Mammary epithelial cell (primary cell): ENCODE measurements at regions of chr20 and their contacts with region 1.

Region 1: DNA sequence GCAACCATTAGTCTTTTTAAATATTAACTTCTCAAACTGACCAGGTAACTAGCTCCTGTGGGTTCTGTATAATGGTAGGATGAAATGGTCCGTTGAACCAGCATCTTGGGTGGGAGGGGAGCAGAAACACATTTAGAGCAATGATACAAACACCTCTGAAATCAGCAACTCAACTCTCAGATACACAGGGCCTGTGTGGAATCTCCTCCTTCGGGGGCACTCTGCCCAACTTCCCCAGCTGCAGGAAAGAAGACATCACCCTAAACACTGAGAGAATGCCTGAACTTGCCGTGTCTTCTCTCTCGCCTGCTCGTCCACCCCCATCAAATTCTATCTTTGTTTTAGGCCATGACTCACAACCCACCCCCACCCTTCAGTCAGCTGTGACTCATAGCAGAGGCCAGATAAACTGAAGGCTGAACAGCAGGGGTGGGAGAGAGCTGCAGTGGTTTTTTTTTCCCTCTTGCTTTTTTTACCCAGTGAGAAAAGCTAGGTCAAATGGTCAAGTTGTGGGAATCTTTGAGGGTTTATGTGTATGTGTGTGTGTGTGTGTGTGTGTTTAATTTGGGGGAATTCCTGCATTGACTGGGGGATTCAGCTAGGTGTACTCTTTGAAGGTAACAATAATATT is 593.4 kb upstream of the JAG1 start:
- DNase-seq: peak; percentile 99
- H3K4me3 ChIP-seq: no peak overlapping the region
- H3K27ac ChIP-seq: peak overlapping the region; percentile 59
- H3K4me1 ChIP-seq: peaks cover 23% of the 10 kb centered on the region
- H3K27me3 ChIP-seq: no peaks in the 10 kb centered on the region
- CTCF ChIP-seq: peak in 1 of 2 donors; percentile 17

Region 2: GRCh38 chr20:10954137-10954840 is 313.0 kb before region 1 on chr20:
- CTCF ChIA-PET with region 1: no interaction called
- dilution Hi-C with region 1: no loop called
- in situ Hi-C with region 1: no loop called
- intact Hi-C with region 1: no loop called
- DNase-seq: peak; percentile 96
- H3K4me3 ChIP-seq: no peak overlapping the region
- H3K27ac ChIP-seq: peak overlapping the region; percentile 77
- H3K4me1 ChIP-seq: peaks cover 42% of the 10 kb centered on the region
- H3K27me3 ChIP-seq: no peaks in the 10 kb centered on the region
- CTCF ChIP-seq: no peak

Region 3: GRCh38 chr20:11098888-11099287 is 168.4 kb before region 1 on chr20:
- CTCF ChIA-PET with region 1: no interaction called
- dilution Hi-C with region 1: no loop called
- in situ Hi-C with region 1: no loop called
- intact Hi-C with region 1: loop called (anchors 2 kb)
- DNase-seq: peak; percentile 28
- H3K4me3 ChIP-seq: no peak overlapping the region
- H3K27ac ChIP-seq: no peak overlapping the region
- H3K4me1 ChIP-seq: peaks cover 4% of the 10 kb centered on the region
- H3K27me3 ChIP-seq: no peaks in the 10 kb centered on the region
- CTCF ChIP-seq: peak in 1 of 2 donors; percentile 55